ENCODE measurements at regions of chr12 and their contacts with region 1.

Region 1: DNA sequence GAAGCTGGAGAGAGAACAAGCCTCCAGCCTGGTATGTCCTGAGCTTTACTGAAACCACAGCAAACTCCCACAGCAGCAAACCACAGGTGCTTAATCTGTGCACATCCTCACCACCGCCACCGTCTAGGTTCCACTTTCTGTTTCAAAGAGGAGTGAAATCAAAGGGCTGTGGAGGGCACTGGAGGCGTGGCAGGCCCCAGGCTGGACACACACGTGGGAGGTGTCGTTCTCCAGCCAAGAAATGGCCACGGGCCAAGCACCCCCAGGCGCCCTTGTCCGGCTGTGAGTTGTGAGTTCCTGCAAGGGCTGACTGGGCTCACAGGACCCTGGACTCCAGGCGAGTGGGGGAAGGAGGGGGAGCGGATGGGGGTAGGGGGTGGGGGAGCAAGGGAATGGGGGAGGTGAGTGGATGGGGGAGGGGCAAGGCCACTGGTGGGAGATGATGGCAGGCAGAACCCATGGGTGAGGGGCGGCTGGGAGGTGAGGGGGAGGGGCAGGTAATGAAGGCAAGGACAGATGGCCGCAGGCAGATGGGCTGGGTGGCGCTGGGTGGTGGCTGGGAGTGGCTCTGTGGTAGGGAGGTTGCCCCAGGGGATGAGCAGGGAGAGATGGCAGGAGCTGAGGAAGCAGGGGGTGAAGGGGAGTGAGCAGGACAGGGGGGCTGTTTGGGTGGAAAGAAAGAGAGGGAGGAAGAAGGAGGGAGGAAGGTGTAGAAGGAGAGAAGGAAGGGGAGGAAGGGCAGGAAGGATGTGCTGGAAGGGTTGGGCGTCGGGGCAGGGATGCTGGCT is 86.7 kb downstream of the NCOR2 start:
- DNase-seq: peak; percentile 89
- H3K4me3 Mint-ChIP-seq: no peak overlapping the region
- H3K27ac Mint-ChIP-seq: no peak overlapping the region
- H3K4me1 Mint-ChIP-seq: peaks cover 35% of the 10 kb centered on the region
- H3K27me3 Mint-ChIP-seq: no peaks in the 10 kb centered on the region

Region 2: GRCh38 chr12:124493809-124494750 is 13.4 kb after region 1 on chr12:
- intact Hi-C with region 1: loop called (anchors 1 kb)
- DNase-seq: peak; percentile 68
- H3K4me3 Mint-ChIP-seq: peak overlapping the region; percentile 57
- H3K27ac Mint-ChIP-seq: peak overlapping the region; percentile 83
- H3K4me1 Mint-ChIP-seq: peaks cover 22% of the 10 kb centered on the region
- H3K27me3 Mint-ChIP-seq: no peaks in the 10 kb centered on the region